Activated CD8-positive, alpha-beta T cell treated with anti-CD3 and anti-CD28 coated beads for 36 hours (primary cell): ENCODE measurements at regions of chr3 and their contacts with region 1.

Region 1: DNA sequence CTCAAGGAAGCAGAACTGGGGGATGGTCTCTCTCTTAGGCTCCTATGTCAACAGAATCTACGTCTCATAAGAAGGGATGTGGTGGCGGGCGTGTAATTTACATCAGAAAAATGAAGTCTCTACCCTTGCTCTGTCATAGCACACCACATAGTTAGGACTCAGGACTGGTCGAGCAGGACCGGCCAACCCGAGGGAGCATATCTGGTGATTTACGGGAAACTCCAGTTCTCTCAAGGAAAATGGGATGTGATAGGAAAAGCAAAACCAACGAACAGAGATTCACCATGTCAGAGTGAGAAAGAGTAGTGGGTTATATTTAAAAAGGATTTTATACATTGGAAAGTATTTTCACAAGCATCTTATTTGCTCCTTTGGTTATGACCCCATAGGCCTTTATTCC is 54.7 kb downstream of the IGF2BP2 start:
- DNase-seq: no peak
- ATAC-seq: no peak
- H3K4me3 Mint-ChIP-seq: no peak overlapping the region
- H3K27ac Mint-ChIP-seq: no peak overlapping the region
- H3K4me1 Mint-ChIP-seq: peaks cover 4% of the 10 kb centered on the region
- H3K27me3 Mint-ChIP-seq: peaks cover 5% of the 10 kb centered on the region
- CTCF ChIP-seq: no peak

Region 2: DNA sequence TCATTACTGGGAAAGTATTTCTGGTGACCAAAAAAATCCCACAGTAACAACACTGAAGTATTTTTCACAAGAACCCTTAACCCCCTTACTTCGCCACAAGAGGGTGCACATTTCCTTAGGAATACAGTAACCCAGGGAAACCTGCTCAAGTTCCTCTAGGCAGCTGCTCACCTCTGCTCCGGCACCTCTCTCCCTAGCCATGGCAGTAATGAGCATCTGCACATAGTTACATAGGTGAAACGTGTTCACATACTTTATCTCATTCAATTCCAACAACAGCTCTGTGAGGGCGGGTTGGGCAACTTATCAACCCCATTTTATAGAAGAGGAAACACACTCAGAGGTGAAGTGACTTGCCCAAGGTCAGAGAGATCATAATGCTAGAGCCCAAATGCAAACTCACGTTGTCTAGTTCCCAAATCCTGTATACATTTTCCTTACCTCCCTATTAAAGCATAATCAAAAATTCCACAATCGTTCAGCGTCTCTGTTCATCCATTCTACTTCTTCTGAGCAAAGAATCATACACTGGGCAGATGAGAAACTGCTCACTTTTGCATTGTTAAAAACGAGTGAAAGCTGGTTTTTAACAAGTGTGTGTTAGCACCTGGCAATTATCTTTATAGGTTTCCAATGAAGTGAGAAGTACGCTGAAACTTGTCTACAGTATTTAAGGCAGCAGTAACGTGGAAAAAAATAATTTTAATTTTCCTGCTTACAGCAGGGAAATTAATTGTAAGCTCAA is 36.0 kb before region 1 on chr3:
- CTCF ChIA-PET with region 1: interaction called, 17 read pairs
- POLR2A ChIA-PET with region 1: no interaction called
- intact Hi-C with region 1: no loop called
- DNase-seq: peak; percentile 31
- ATAC-seq: no peak
- H3K4me3 Mint-ChIP-seq: no peak overlapping the region
- H3K27ac Mint-ChIP-seq: no peak overlapping the region
- H3K4me1 Mint-ChIP-seq: no peaks in the 10 kb centered on the region
- H3K27me3 Mint-ChIP-seq: peaks cover 7% of the 10 kb centered on the region
- CTCF ChIP-seq: no peak

Region 3: DNA sequence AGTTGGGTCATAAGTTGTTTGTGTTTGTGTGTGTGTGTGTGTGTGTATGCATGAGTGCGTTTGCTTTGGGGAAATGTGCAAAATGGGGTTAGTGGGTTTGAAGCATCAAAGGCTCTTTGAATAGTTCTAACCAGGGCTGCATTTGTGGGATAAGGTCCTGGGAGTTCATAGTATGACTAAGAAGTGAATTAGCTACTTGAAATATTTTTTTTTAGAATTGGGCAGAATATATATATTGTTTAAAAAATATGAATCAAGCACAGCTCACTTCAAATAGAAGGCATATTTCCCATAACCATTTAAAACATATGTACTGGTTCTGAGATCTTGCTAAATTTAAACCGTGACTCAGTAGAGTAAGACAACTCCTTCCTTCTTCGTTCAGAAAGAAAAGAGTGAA is 11.7 kb after region 1 on chr3:
- CTCF ChIA-PET with region 1: interaction called, 51 read pairs
- POLR2A ChIA-PET with region 1: interaction called, 3 read pairs
- intact Hi-C with region 1: no loop called
- DNase-seq: no peak
- ATAC-seq: no peak
- H3K4me3 Mint-ChIP-seq: no peak overlapping the region
- H3K27ac Mint-ChIP-seq: no peak overlapping the region
- H3K4me1 Mint-ChIP-seq: no peaks in the 10 kb centered on the region
- H3K27me3 Mint-ChIP-seq: no peaks in the 10 kb centered on the region
- CTCF ChIP-seq: no peak